PC-3 (cell line): ENCODE measurements at regions of chr6 and their contacts with region 1.

Region 1: GRCh38 chr6:129498950-129499842 is 210.8 kb downstream of the ARHGAP18 start:
- DNase-seq: peak; percentile 81
- ATAC-seq: peak; percentile 52
- H3K4me3 ChIP-seq: peak overlapping the region; percentile 49; the same call in 1 of the 2 replicates
- H3K27ac ChIP-seq: peak overlapping the region; percentile 52
- H3K4me1 ChIP-seq: peaks cover 52% of the 10 kb centered on the region
- H3K27me3 ChIP-seq: no peaks in the 10 kb centered on the region
- CTCF ChIP-seq: peak; percentile 76

Region 2: GRCh38 chr6:129567374-129567773 is 68.2 kb after region 1 on chr6:
- CTCF ChIA-PET with region 1: no interaction called
- POLR2A ChIA-PET with region 1: interaction called, 4 read pairs
- intact Hi-C with region 1: loop called (anchors 2 kb)
- DNase-seq: peak; percentile 29
- ATAC-seq: no peak
- H3K4me3 ChIP-seq: no peak overlapping the region
- H3K27ac ChIP-seq: no peak overlapping the region
- H3K4me1 ChIP-seq: no peaks in the 10 kb centered on the region
- H3K27me3 ChIP-seq: no peaks in the 10 kb centered on the region
- CTCF ChIP-seq: peak; percentile 61

Region 3: DNA sequence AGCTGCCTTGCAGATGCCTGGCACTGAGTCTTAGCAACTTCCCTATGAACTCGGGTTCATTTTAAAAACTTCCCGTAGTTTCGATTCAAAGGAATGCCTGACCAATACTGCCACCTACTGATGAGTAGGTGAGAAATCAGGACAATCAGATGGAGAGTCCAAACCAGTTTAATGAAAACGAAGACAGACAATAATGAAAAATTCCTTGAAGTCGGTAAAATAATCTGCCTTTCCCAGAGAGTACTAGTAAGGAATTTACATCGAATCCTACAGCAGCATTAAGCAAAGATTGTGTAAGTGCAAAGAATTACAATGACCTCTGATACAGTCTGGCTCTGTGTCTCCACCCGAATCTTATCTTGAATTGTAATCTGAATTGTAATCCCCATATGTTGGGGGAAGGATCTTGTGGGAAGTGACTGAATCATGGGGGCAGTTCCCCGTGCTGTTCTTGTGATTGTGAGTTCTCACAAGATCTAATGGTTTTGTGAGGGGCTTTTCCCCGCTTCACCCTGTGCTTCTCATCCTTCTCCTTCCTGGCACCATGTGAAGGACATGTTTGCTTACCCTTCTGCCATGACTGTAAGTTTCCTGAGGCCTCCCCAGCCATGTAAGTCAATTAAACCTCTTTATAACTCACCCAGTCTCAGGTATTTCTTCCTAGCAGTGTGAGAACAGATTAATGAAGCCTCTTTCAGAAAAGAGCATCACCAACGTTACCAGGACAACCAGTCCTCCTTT is 76.4 kb after region 1 on chr6:
- CTCF ChIA-PET with region 1: interaction called, 5 read pairs
- POLR2A ChIA-PET with region 1: no interaction called
- intact Hi-C with region 1: loop called (anchors 1 kb)
- DNase-seq: peak; percentile 70
- ATAC-seq: peak; percentile 71
- H3K4me3 ChIP-seq: peak overlapping the region; percentile 49
- H3K27ac ChIP-seq: peak overlapping the region; percentile 44
- H3K4me1 ChIP-seq: peaks cover 7% of the 10 kb centered on the region
- H3K27me3 ChIP-seq: no peaks in the 10 kb centered on the region
- CTCF ChIP-seq: peak; percentile 85

Region 4: DNA sequence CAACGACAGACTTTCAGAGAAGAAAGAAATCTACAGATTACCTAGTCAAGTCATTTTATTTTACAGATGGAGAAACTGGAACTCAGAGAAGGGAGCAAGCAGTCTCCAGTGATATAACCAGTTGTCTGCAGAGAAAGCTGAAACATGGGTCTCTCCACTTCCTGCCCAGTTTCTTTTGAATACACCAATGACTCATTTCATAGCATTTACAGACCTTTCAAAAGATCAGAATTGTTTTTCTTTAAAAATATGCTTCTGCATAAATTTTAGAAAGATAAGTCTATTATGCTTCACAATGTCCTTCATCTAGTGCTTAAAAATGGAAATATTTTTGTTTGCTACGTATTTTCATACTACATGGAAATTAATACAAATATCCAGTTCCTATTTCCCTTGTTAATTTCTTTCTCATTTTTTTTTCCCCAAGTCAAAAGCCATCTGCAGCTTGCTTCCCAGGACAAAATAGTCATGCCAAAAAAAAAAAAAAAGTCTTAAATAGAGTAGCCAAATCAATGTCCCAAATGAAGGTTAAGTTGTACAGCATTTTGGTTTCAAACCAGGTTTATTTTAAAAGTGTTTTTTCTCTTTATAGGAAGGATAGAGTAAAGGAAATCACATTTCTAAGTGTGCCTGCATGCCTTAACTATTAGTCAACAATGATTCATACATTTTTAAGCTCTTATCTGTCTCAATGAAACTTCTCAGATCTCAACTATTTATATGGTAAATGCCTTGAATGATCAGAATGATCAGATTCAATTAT is 173.9 kb after region 1 on chr6:
- CTCF ChIA-PET with region 1: no interaction called
- POLR2A ChIA-PET with region 1: no interaction called
- intact Hi-C with region 1: loop called (anchors 10 kb)
- DNase-seq: peak; percentile 83
- ATAC-seq: peak; percentile 82
- H3K4me3 ChIP-seq: peak overlapping the region; percentile 54
- H3K27ac ChIP-seq: peak overlapping the region; percentile 80
- H3K4me1 ChIP-seq: peaks cover 43% of the 10 kb centered on the region
- H3K27me3 ChIP-seq: no peaks in the 10 kb centered on the region
- CTCF ChIP-seq: no peak

Region 5: DNA sequence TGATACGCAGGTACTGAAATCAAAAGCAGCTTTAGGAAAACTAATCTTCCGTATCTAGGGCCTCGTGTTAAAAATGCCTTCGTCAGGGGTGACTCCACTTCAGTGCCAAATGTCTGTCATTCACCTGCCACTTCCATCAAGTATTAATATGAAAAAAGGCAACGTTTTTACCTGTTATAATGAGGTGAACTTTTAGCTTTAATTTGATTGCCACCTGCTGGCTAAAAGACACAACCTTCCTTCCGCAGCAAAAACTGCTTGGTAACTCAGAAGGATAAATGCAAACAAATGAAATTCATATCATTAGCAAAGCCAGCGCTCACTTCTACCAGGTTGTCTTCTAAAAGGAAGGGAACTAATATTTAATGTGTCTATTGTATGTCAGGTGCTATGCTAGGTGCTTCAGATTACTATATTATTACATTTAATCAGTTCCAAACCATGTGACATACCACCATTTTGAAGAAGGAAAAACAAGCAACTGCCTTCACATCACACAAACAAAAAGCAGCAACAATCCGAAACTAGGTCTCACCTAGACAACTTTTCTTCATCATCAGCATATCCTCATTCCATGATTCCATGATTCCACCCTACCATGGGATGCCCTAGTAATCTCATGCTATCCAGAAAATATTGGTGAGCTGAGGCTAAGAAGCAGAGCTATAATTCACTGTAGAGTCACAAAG is 231.4 kb after region 1 on chr6:
- CTCF ChIA-PET with region 1: no interaction called
- POLR2A ChIA-PET with region 1: no interaction called
- intact Hi-C with region 1: loop called (anchors 1 kb)
- DNase-seq: peak; percentile 61
- ATAC-seq: peak; percentile 45; the same call in 1 of the 2 replicates
- H3K4me3 ChIP-seq: no peak overlapping the region
- H3K27ac ChIP-seq: no peak overlapping the region
- H3K4me1 ChIP-seq: peaks cover 4% of the 10 kb centered on the region; the same call in 1 of the 2 replicates
- H3K27me3 ChIP-seq: no peaks in the 10 kb centered on the region
- CTCF ChIP-seq: peak; percentile 77

Region 6: GRCh38 chr6:129860908-129861665 is 361.9 kb after region 1 on chr6 and contains the start of gene TMEM244:
- CTCF ChIA-PET with region 1: no interaction called
- POLR2A ChIA-PET with region 1: no interaction called
- intact Hi-C with region 1: loop called (anchors 10 kb)
- DNase-seq: peak; percentile 28
- ATAC-seq: peak; percentile 29
- H3K4me3 ChIP-seq: peak within 1 kb of the TSS; percentile 56
- H3K27ac ChIP-seq: 0 out of 2 replicates have a peak within 1 kb of the TSS, but pooled peaks have one; percentile 3
- H3K4me1 ChIP-seq: peaks cover 35% of the 10 kb centered on the region
- H3K27me3 ChIP-seq: no peaks in the 10 kb centered on the region
- CTCF ChIP-seq: no peak
- total RNA-seq, gene TMEM244: not detected in 2 replicates

Region 7: DNA sequence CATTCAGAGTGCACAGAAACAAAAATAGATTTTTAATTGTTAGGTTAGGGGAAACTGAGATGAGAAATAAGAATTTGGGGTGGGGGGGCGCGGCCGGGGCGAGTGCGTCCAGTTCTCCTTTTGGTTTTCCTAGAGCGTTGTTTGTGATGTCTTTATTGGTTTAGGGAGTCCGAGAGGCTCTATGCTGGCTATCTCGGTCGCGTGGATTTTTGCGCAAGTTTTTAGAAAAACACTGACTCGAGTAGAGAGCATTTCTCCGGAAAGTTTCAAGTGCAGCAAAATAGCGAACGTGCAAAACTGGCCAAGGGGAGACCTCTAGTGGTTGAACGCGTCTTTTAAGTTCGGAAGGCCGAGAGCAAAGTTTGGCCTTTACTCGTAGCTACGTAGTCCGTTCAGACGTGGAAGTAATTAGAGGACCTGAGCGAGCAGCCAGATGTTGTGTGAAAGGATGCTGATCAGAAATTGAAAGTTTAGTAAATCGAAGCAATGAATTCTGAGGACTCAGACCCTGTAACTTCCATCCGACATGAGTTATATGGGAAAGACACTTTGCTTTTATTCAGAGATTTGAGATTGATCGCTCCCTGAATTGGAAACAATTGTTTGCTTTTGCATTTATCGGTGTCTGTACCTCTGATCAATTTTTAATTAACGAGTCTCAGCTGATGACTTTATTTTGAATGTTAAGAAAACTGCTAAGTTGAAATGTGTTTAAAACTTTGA is 521.9 kb after region 1 on chr6:
- CTCF ChIA-PET with region 1: no interaction called
- POLR2A ChIA-PET with region 1: no interaction called
- intact Hi-C with region 1: loop called (anchors 5 kb)
- DNase-seq: peak; percentile 85
- ATAC-seq: peak; percentile 54
- H3K4me3 ChIP-seq: peak overlapping the region; percentile 75
- H3K27ac ChIP-seq: no peak overlapping the region
- H3K4me1 ChIP-seq: no peaks in the 10 kb centered on the region; the same call in 1 of the 2 replicates
- H3K27me3 ChIP-seq: no peaks in the 10 kb centered on the region
- CTCF ChIP-seq: peak; percentile 77